ENCODE measurements at regions of chr12 and their contacts with region 1.

Region 1: GRCh38 chr12:69070319-69071090 is 137.5 kb upstream of the CPM start:
- DNase-seq: peak; percentile 57
- CTCF ChIP-seq: peak; percentile 84

Region 2: GRCh38 chr12:68131869-68132405 is 938.6 kb before region 1 on chr12:
- in situ Hi-C with region 1: no loop called
- DNase-seq: no peak
- CTCF ChIP-seq: no peak

Region 3: GRCh38 chr12:68856510-68856909 is 214.0 kb before region 1 on chr12:
- in situ Hi-C with region 1: loop called (anchors 10 kb)
- DNase-seq: no peak
- CTCF ChIP-seq: no peak

Region 4: GRCh38 chr12:69464428-69464827 is 393.9 kb after region 1 on chr12:
- in situ Hi-C with region 1: no loop called
- DNase-seq: no peak
- CTCF ChIP-seq: no peak